Panc1 (cell line): ENCODE measurements at regions of chr18 and their contacts with region 1.

Region 1: GRCh38 chr18:3454365-3455089 is 4.6 kb downstream of the TGIF1 start:
- DNase-seq: no peak
- ATAC-seq: no peak
- H3K4me3 ChIP-seq: peak overlapping the region; percentile 97 to 98
- H3K27ac ChIP-seq: peak overlapping the region; percentile 100
- H3K4me1 ChIP-seq: peaks cover 49% of the 10 kb centered on the region
- H3K27me3 ChIP-seq: no peaks in the 10 kb centered on the region
- CTCF ChIP-seq: peak; percentile 69; the same call in 1 of the 2 replicates

Region 2: DNA sequence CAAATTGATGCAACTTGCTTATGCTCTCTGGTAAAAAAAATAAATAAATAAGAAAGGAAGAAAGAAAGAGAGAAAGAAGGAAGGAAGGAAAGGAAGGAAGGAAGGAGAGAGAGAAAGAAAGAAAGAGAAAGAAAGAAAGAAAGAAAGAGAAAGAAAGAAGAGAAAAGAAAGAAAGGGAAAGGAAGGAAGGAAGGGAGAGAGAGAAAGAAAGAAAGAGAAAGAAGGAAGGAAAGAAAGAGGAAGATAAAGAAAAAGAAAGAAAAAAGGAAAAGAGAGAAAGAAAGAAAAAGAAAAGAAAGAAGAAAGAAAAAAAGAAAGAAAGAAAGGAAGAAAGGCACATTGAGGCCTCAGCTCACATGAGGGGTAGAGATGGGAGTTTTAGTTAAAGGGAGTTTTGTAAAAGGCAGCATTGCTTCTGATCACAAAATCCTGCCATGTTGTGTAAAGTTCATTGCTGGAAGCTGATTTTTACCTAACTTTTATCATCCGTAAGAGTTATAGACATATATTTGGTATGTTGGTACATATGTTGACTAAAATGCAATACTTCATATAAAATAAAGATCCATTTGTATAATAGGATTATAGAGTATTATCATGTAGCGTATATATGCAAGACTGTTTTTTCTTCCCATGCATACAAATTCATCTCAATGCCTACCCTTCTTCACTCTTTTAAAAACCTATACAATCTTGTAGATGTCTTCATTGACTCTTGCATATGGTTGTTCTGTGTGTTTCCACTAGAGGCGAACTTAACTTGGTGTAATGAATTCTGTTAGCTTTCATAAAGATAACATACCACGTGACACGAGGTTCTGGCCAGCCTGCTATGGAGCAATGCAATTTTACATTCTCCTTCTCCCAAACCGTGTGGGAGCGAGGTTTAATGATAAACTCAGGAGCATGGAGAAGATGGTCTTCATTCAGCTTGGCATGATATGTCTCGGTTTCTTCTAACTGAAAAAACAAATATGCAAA is 267.6 kb before region 1 on chr18:
- CTCF ChIA-PET with region 1: no interaction called
- POLR2A ChIA-PET with region 1: no interaction called
- in situ Hi-C with region 1: no loop called
- intact Hi-C with region 1: no loop called
- DNase-seq: no peak
- ATAC-seq: 0 out of 2 replicates have a peak, but pooled peaks have one; percentile 56
- H3K4me3 ChIP-seq: no peak overlapping the region
- H3K27ac ChIP-seq: no peak overlapping the region
- H3K4me1 ChIP-seq: no peaks in the 10 kb centered on the region
- H3K27me3 ChIP-seq: no peaks in the 10 kb centered on the region
- CTCF ChIP-seq: no peak; the same call in 1 of the 2 replicates

Region 3: DNA sequence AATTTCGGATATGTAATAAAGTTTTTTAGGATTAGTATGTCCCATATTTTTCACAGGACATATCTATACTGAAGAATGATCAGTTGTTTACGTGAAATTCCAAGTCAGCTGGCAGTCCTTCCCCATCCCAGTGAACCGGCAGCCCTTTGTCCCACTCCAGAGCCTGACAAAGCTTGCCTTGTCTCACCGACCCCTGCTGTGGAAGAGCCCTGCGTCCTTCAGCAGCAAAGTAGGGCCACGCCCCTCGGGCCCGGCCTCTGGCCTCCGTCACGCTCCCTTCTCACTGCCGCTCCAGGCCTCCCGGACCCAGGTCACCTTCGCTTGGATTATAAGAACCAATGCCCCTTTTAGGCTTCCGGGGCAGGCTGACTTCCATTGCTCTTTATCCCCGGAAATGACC is 94.3 kb before region 1 on chr18:
- CTCF ChIA-PET with region 1: no interaction called
- POLR2A ChIA-PET with region 1: no interaction called
- in situ Hi-C with region 1: no loop called
- intact Hi-C with region 1: no loop called
- DNase-seq: no peak
- ATAC-seq: 0 out of 2 replicates have a peak, but pooled peaks have one; percentile 38
- H3K4me3 ChIP-seq: no peak overlapping the region
- H3K27ac ChIP-seq: no peak overlapping the region; the same call in 1 of the 2 replicates
- H3K4me1 ChIP-seq: no peaks in the 10 kb centered on the region
- H3K27me3 ChIP-seq: no peaks in the 10 kb centered on the region
- CTCF ChIP-seq: no peak

Region 4: DNA sequence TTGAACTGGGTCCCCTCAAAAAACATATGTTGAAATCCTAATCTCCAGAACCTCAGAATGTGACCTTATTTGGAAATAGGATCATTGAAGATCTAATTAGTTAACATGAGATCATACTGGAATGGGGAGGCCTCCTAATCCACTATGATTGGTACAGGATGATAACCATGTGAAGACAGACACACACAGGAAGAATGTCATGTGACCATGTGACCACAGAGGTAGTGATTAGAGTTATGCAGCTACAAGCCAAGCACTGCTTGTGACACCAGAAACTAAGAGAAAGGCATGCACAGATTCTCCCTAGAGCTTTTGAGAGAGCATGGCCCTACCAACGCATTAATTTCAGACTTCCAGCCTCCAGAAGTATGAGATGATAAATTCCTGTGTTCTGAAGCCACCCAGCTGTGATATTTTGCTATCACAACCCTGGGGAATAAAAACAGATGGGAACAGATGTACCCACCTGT is 51.5 kb before region 1 on chr18:
- CTCF ChIA-PET with region 1: interaction called, 5 read pairs
- POLR2A ChIA-PET with region 1: interaction called, 14 read pairs
- in situ Hi-C with region 1: no loop called
- intact Hi-C with region 1: no loop called
- DNase-seq: no peak
- ATAC-seq: peak; percentile 43; the same call in 1 of the 2 replicates
- H3K4me3 ChIP-seq: no peak overlapping the region
- H3K27ac ChIP-seq: peak overlapping the region; percentile 80
- H3K4me1 ChIP-seq: peaks cover 5% of the 10 kb centered on the region
- H3K27me3 ChIP-seq: no peaks in the 10 kb centered on the region
- CTCF ChIP-seq: no peak

Region 5: DNA sequence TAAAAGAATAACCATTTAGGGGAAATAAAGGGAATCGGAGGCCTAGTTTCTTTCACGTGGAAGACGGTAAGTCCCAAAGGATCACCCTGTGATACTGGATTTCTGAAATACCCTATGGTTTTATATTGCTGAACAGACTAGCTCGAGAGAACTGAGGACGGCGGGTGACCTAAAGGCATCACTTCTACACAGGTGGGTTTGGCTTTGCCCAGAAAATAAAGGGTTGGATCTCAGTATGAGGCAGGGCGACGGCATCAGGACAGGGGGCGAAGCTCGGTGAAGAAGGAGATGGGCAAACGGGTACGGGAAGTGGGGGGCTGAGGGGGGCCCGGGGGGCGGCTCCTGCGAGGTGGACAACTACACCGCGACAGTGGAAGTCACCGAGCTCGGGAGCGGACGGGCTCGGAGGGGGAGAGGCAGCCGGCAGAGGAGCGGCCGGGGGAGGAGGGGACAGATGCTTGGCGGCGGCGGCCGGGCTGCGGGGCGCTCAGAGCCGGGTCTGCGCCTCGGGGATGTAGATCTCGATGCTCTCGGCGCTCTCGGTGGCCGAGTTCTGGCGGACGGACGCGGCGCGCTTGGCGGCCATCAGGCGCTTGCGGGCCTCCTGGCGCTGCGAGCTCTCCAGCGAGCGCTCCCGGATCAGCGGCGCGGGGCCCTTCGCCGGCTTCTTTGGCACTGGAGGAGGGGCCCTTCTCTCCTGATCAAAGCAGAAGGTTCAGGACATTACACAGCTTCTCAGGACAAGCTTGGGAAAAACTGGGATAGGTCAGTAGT is 44.4 kb after region 1 on chr18:
- CTCF ChIA-PET with region 1: no interaction called
- POLR2A ChIA-PET with region 1: interaction called, 18 read pairs
- in situ Hi-C with region 1: no loop called
- intact Hi-C with region 1: loop called (anchors 5 kb)
- DNase-seq: no peak
- ATAC-seq: peak; percentile 75
- H3K4me3 ChIP-seq: peak overlapping the region; percentile 39 to 57
- H3K27ac ChIP-seq: peak overlapping the region; percentile 98
- H3K4me1 ChIP-seq: peaks cover 72% of the 10 kb centered on the region
- H3K27me3 ChIP-seq: no peaks in the 10 kb centered on the region
- CTCF ChIP-seq: no peak

Region 6: GRCh38 chr18:3525870-3526420 is 71.4 kb after region 1 on chr18:
- CTCF ChIA-PET with region 1: no interaction called
- POLR2A ChIA-PET with region 1: no interaction called
- in situ Hi-C with region 1: no loop called
- intact Hi-C with region 1: no loop called
- DNase-seq: no peak
- ATAC-seq: peak; percentile 77
- H3K4me3 ChIP-seq: no peak overlapping the region
- H3K27ac ChIP-seq: peak overlapping the region; percentile 86
- H3K4me1 ChIP-seq: peaks cover 18% of the 10 kb centered on the region
- H3K27me3 ChIP-seq: no peaks in the 10 kb centered on the region
- CTCF ChIP-seq: no peak

Region 7: GRCh38 chr18:3593904-3594661 is 139.6 kb after region 1 on chr18:
- CTCF ChIA-PET with region 1: interaction called, 12 read pairs
- POLR2A ChIA-PET with region 1: interaction called, 13 read pairs
- in situ Hi-C with region 1: no loop called
- intact Hi-C with region 1: loop called (anchors 2 kb)
- DNase-seq: peak; percentile 95
- ATAC-seq: peak; percentile 82
- H3K4me3 ChIP-seq: peak overlapping the region; percentile 50 to 86
- H3K27ac ChIP-seq: peak overlapping the region; percentile 96
- H3K4me1 ChIP-seq: peaks cover 73% of the 10 kb centered on the region
- H3K27me3 ChIP-seq: no peaks in the 10 kb centered on the region
- CTCF ChIP-seq: peak; percentile 96

Region 8: DNA sequence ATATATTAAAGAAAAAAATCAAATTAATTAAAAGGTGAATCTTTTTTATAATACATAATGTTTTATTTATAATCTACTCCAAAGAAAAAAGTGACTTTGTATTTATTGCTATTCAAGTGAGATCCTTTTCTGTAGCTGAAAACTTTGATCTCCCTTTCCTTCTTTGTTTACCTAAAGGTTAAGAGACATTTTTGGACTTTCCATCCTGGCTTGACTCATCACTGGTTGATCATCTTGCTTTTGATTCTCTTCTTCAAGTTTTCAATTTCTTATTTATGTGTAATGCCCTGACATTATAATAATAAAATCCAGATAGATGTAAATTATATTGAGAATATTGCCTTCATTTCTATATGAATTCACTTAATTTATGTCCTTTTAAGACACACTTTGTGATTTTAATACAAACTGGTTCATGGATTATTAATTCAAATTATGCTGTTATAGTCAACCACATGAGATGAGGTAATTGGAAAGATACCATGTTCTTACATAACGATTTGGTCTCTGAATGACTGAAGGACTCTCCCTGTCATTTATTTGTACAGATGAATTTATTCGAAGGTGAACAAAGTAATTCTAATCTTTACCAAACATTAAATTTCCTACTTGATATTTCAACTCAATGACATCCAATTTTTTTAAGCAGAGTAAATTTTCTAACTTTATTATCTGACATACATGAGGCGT is 179.9 kb after region 1 on chr18:
- CTCF ChIA-PET with region 1: no interaction called
- POLR2A ChIA-PET with region 1: no interaction called
- in situ Hi-C with region 1: no loop called
- intact Hi-C with region 1: no loop called
- DNase-seq: no peak
- ATAC-seq: no peak
- H3K4me3 ChIP-seq: no peak overlapping the region
- H3K27ac ChIP-seq: peak overlapping the region; percentile 73; the same call in 1 of the 2 replicates
- H3K4me1 ChIP-seq: no peaks in the 10 kb centered on the region
- H3K27me3 ChIP-seq: no peaks in the 10 kb centered on the region
- CTCF ChIP-seq: no peak

Region 9: GRCh38 chr18:3665780-3666525 is 211.4 kb after region 1 on chr18:
- CTCF ChIA-PET with region 1: interaction called, 7 read pairs
- POLR2A ChIA-PET with region 1: interaction called, 23 read pairs
- in situ Hi-C with region 1: no loop called
- intact Hi-C with region 1: loop called (anchors 5 kb)
- DNase-seq: peak; percentile 87
- ATAC-seq: peak; percentile 88
- H3K4me3 ChIP-seq: peak overlapping the region; percentile 3 to 4; a peak in 2 of 4 replicates
- H3K27ac ChIP-seq: peak overlapping the region; percentile 100
- H3K4me1 ChIP-seq: peaks cover 56% of the 10 kb centered on the region
- H3K27me3 ChIP-seq: no peaks in the 10 kb centered on the region
- CTCF ChIP-seq: peak; percentile 92